B cell (primary cell): ENCODE measurements at regions of chr13 and their contacts with region 1.

Region 1: GRCh38 chr13:40666045-40666904 is at the start of gene FOXO1:
- DNase-seq: peak; percentile 94
- ATAC-seq: peak; percentile 69
- H3K4me3 ChIP-seq: peak within 1 kb of the TSS; percentile 67 to 95 (median 84)
- H3K4me3 Mint-ChIP-seq: peak within 1 kb of the TSS; percentile 97
- H3K27ac ChIP-seq: peak within 1 kb of the TSS; percentile 77 to 91
- H3K27ac Mint-ChIP-seq: peak within 1 kb of the TSS; percentile 98
- H3K4me1 ChIP-seq: peaks cover 30 to 32% of the 10 kb centered on the region in 2 donors
- H3K4me1 Mint-ChIP-seq: peaks cover 38% of the 10 kb centered on the region
- H3K27me3 ChIP-seq: no peaks in the 10 kb centered on the region
- H3K27me3 Mint-ChIP-seq: no peaks in the 10 kb centered on the region
- CTCF ChIP-seq: no peak
- total RNA-seq, gene FOXO1: 77.9 and 83.1 TPM in 2 replicates

Region 2: DNA sequence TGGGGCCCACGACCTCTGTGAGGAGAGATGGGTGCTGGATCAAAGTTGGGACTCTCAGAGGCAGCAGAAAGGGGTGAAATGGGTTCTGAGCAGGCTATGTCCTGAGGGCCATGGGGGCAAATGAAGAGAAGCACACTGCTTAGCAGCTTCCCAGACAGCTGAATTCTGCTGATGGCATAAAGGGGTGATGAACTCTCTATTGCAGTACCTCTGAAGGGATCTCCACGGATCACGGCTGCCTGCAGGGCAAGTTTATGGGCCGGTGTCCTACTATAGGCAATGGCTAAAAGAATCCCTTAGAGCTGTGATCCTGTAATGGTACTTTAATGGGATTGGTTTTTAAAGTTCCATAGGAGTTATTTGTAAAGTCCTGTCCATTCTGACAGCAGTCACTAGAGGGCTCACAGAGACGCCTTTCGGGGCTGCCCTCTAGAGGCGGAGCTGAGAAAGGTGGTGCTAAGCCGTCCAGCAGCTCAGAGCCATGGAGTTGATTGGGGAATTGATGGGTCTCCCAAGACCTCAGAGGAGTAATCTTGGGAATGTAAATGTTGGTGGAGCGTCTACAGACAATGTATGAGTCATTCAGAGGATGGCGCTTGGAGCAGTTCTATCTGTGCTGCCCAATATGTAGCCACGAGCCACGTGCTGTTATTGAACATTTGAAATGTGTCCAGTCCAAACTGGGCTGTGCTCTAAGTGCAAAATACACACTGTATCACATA is 723.6 kb before region 1 on chr13:
- CTCF ChIA-PET with region 1: interaction called, 13 read pairs
- POLR2A ChIA-PET with region 1: interaction called, 3 read pairs
- intact Hi-C with region 1: no loop called
- DNase-seq: peak; percentile 75
- ATAC-seq: peak; percentile 99
- H3K4me3 ChIP-seq: no peak overlapping the region
- H3K4me3 Mint-ChIP-seq: no peak overlapping the region
- H3K27ac ChIP-seq: no peak overlapping the region
- H3K27ac Mint-ChIP-seq: no peak overlapping the region
- H3K4me1 ChIP-seq: peaks cover 0 to 2% of the 10 kb centered on the region in 2 donors
- H3K4me1 Mint-ChIP-seq: peaks cover 1% of the 10 kb centered on the region
- H3K27me3 ChIP-seq: peaks cover 0 to 4% (median 0%) of the 10 kb centered on the region in 4 experiments
- H3K27me3 Mint-ChIP-seq: peaks cover 4% of the 10 kb centered on the region
- CTCF ChIP-seq: peak; percentile 98

Region 3: DNA sequence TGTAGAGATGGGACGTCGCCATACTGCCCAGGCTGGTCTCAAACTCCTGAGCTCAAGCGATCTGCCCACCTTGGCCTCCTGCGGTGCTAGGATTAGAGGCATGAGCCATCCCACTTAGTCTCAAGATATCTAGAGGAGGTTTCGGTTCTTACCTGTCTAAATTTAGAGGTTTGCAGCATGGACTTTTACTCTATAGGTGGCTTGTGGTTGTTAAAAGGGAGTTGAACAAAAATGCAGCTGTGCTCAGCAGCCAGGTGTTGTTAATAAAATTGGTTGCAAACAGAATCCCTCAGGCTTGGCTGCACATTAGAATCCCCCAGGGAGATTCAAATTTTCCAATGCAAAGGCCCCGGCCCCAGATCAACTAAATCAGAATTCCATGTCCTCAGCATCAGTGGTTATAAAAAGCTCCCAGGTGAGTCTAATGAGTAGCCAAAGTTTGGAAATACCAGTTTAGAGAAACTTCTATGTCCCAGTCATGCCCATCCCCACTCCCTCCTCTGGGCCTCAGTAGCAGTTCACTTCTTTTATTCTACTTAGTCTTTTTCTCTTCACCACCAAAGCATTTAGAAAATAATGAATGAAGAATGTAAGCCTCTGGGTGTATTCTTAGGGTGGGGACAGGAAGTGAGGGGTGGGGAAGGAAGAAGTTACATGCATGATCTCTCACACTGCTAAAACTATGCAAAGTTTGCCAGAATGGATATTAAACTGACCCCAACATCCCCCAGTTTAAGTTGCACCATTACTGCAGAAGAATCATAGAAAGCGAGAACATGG is 539.8 kb before region 1 on chr13:
- CTCF ChIA-PET with region 1: interaction called, 4 read pairs
- POLR2A ChIA-PET with region 1: no interaction called
- intact Hi-C with region 1: loop called (anchors 5 kb)
- DNase-seq: peak; percentile 50
- ATAC-seq: peak; percentile 32
- H3K4me3 ChIP-seq: peak overlapping the region in 3 of 5 experiments; percentile 16 to 53 (median 18)
- H3K4me3 Mint-ChIP-seq: peak overlapping the region; percentile 59
- H3K27ac ChIP-seq: peak overlapping the region; percentile 52 to 69
- H3K27ac Mint-ChIP-seq: peak overlapping the region; percentile 51
- H3K4me1 ChIP-seq: peaks cover 46 to 47% of the 10 kb centered on the region in 2 donors
- H3K4me1 Mint-ChIP-seq: peaks cover 51% of the 10 kb centered on the region
- H3K27me3 ChIP-seq: no peaks in the 10 kb centered on the region
- H3K27me3 Mint-ChIP-seq: no peaks in the 10 kb centered on the region
- CTCF ChIP-seq: no peak

Region 4: GRCh38 chr13:40329657-40330485 is 336.4 kb before region 1 on chr13:
- CTCF ChIA-PET with region 1: no interaction called
- POLR2A ChIA-PET with region 1: no interaction called
- intact Hi-C with region 1: no loop called
- DNase-seq: no peak
- ATAC-seq: peak; percentile 39
- H3K4me3 ChIP-seq: no peak overlapping the region
- H3K4me3 Mint-ChIP-seq: no peak overlapping the region
- H3K27ac ChIP-seq: no peak overlapping the region
- H3K27ac Mint-ChIP-seq: no peak overlapping the region
- H3K4me1 ChIP-seq: peaks cover 6 to 10% of the 10 kb centered on the region in 2 donors
- H3K4me1 Mint-ChIP-seq: peaks cover 24% of the 10 kb centered on the region
- H3K27me3 ChIP-seq: no peaks in the 10 kb centered on the region
- H3K27me3 Mint-ChIP-seq: no peaks in the 10 kb centered on the region
- CTCF ChIP-seq: no peak

Region 5: GRCh38 chr13:40433577-40433976 is 232.7 kb before region 1 on chr13:
- CTCF ChIA-PET with region 1: interaction called, 15 read pairs
- POLR2A ChIA-PET with region 1: interaction called, 4 read pairs
- intact Hi-C with region 1: loop called (anchors 2 kb)
- DNase-seq: peak; percentile 71
- ATAC-seq: peak; percentile 64
- H3K4me3 ChIP-seq: no peak overlapping the region
- H3K4me3 Mint-ChIP-seq: peak overlapping the region; percentile 53
- H3K27ac ChIP-seq: peak overlapping the region; percentile 71 to 81
- H3K27ac Mint-ChIP-seq: peak overlapping the region; percentile 85
- H3K4me1 ChIP-seq: peaks cover 88 to 90% of the 10 kb centered on the region in 2 donors
- H3K4me1 Mint-ChIP-seq: peaks cover 86% of the 10 kb centered on the region
- H3K27me3 ChIP-seq: no peaks in the 10 kb centered on the region
- H3K27me3 Mint-ChIP-seq: no peaks in the 10 kb centered on the region
- CTCF ChIP-seq: no peak

Region 6: DNA sequence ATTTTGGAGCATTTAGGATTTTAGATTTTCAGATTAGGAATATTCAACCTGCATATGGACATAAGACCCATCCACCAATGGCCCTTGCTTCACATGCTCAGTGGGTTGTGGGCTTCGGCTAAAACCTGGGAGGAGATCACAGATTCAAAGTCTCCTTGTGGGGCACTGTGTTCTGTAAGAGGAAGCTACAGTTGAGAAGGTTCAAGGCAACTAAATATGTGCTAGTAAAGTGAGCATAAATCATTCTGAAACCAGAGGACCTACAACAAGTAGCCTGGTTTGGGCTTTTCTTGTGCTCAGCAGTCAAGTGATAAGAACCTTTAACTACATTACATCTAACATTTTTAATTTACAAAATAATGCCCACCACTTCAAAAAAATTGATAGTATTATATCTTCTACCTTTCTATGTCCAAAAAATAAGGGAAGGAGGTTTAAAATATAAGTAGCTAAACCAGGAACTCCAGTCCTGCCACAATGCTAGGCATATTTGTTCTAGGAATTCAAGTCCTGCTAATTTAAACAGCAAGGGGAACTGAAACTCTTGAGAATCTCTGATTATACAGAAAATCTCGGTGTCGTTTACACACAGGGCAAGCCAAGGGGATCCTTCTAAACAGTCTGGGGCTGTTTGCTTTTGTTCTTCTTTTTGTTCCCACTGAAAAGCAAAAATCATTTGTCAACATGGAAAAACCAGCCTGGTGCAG is 36.4 kb before region 1 on chr13:
- CTCF ChIA-PET with region 1: interaction called, 4 read pairs
- POLR2A ChIA-PET with region 1: no interaction called
- intact Hi-C with region 1: loop called (anchors 2 kb)
- DNase-seq: peak; percentile 68
- ATAC-seq: peak; percentile 73
- H3K4me3 ChIP-seq: peak overlapping the region in 2 of 5 experiments; percentile 6 to 37
- H3K4me3 Mint-ChIP-seq: peak overlapping the region; percentile 66
- H3K27ac ChIP-seq: peak overlapping the region; percentile 74 to 80
- H3K27ac Mint-ChIP-seq: peak overlapping the region; percentile 80
- H3K4me1 ChIP-seq: peaks cover 69 to 76% of the 10 kb centered on the region in 2 donors
- H3K4me1 Mint-ChIP-seq: peaks cover 80% of the 10 kb centered on the region
- H3K27me3 ChIP-seq: no peaks in the 10 kb centered on the region
- H3K27me3 Mint-ChIP-seq: no peaks in the 10 kb centered on the region
- CTCF ChIP-seq: no peak

Region 7: DNA sequence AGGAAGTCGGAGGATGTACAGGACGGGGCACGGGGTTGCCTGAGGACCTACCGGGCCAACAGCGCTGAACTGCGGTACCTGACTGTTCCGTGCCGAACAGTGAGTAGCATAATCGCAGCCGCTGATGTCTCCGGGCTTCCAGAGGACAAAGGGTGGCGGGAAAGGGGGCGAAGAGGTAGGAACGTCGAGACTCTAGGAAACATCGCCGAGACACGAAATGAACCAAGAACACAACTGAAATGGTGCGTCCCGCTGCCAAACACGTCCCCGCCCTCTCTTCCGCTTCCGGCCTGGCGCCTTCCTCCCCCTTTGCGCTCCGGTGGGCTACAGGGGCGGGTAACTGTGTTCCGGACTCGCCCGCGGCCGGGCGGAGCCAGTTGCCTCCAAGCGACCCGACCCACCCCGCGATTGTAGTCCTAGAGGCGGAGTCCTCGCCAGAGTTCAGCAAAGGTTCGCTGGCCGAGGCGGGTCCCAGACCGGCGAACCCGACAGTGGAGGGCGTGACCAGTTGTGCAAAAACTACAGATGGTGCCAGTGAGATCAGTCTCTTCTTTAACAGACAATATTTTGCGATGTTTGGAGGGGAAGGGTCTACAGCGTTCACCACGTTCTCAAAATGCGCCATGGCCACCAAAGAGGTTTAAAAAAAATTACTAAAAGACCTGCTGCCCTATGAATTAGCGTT is 104.8 kb after region 1 on chr13 and contains the start of gene MRPS31:
- CTCF ChIA-PET with region 1: interaction called, 12 read pairs
- POLR2A ChIA-PET with region 1: no interaction called
- intact Hi-C with region 1: loop called (anchors 2 kb)
- DNase-seq: peak; percentile 95
- ATAC-seq: peak; percentile 100
- H3K4me3 ChIP-seq: peak within 1 kb of the TSS; percentile 65 to 99 (median 99)
- H3K4me3 Mint-ChIP-seq: peak within 1 kb of the TSS; percentile 100
- H3K27ac ChIP-seq: peak within 1 kb of the TSS; percentile 64 to 88
- H3K27ac Mint-ChIP-seq: peak within 1 kb of the TSS; percentile 97
- H3K4me1 ChIP-seq: peaks cover 12 to 19% of the 10 kb centered on the region in 2 donors
- H3K4me1 Mint-ChIP-seq: peaks cover 21% of the 10 kb centered on the region
- H3K27me3 ChIP-seq: no peaks in the 10 kb centered on the region
- H3K27me3 Mint-ChIP-seq: no peaks in the 10 kb centered on the region
- CTCF ChIP-seq: no peak
- total RNA-seq, gene MRPS31: 29.7 and 34.4 TPM in 2 replicates

Region 8: GRCh38 chr13:40813661-40814454 is 147.6 kb after region 1 on chr13:
- CTCF ChIA-PET with region 1: no interaction called
- POLR2A ChIA-PET with region 1: no interaction called
- intact Hi-C with region 1: no loop called
- DNase-seq: no peak
- ATAC-seq: no peak
- H3K4me3 ChIP-seq: no peak overlapping the region
- H3K4me3 Mint-ChIP-seq: no peak overlapping the region
- H3K27ac ChIP-seq: no peak overlapping the region
- H3K27ac Mint-ChIP-seq: no peak overlapping the region
- H3K4me1 ChIP-seq: peaks cover 8 to 9% of the 10 kb centered on the region in 2 donors
- H3K4me1 Mint-ChIP-seq: peaks cover 18% of the 10 kb centered on the region
- H3K27me3 ChIP-seq: no peaks in the 10 kb centered on the region
- H3K27me3 Mint-ChIP-seq: no peaks in the 10 kb centered on the region
- CTCF ChIP-seq: peak; percentile 50

Region 9: GRCh38 chr13:41054212-41054877 is 388.1 kb after region 1 on chr13:
- CTCF ChIA-PET with region 1: no interaction called
- POLR2A ChIA-PET with region 1: interaction called, 3 read pairs
- intact Hi-C with region 1: loop called (anchors 5 kb)
- DNase-seq: peak; percentile 72
- ATAC-seq: peak; percentile 34
- H3K4me3 ChIP-seq: peak overlapping the region in 1 of 5 experiments; percentile 38
- H3K4me3 Mint-ChIP-seq: peak overlapping the region; percentile 82
- H3K27ac ChIP-seq: peak overlapping the region in 1 of 2 donors; percentile 53
- H3K27ac Mint-ChIP-seq: peak overlapping the region; percentile 90
- H3K4me1 ChIP-seq: peaks cover 29 to 30% of the 10 kb centered on the region in 2 donors
- H3K4me1 Mint-ChIP-seq: peaks cover 64% of the 10 kb centered on the region
- H3K27me3 ChIP-seq: no peaks in the 10 kb centered on the region
- H3K27me3 Mint-ChIP-seq: no peaks in the 10 kb centered on the region
- CTCF ChIP-seq: peak; percentile 71